Activated T-helper 1 cell treated with anti-CD3 and anti-CD28 coated beads, Interleukin-12 subunit alpha, Interleukin-12 subunit beta, Interleukin-2, Interleukin-4 antibody, amounts not matched to agents 30 ng/mL and 10 ng/mL and 1 ng/mL, durations not matched to agents 14 hours and 24 hours and 36 hours (primary cell): ENCODE measurements at regions of chr2 and their contacts with region 1.

Region 1: GRCh38 chr2:55693181-55694134 is at the start of gene PNPT1:
- DNase-seq: peak; percentile 92
- H3K4me3 Mint-ChIP-seq: peak within 1 kb of the TSS; percentile 98
- H3K27ac Mint-ChIP-seq: peak within 1 kb of the TSS; percentile 89
- H3K4me1 Mint-ChIP-seq: peaks cover 39% of the 10 kb centered on the region
- H3K27me3 Mint-ChIP-seq: peaks cover 2% of the 10 kb centered on the region
- total RNA-seq, gene PNPT1: 65.1 and 71.1 TPM in 2 replicates

Region 2: DNA sequence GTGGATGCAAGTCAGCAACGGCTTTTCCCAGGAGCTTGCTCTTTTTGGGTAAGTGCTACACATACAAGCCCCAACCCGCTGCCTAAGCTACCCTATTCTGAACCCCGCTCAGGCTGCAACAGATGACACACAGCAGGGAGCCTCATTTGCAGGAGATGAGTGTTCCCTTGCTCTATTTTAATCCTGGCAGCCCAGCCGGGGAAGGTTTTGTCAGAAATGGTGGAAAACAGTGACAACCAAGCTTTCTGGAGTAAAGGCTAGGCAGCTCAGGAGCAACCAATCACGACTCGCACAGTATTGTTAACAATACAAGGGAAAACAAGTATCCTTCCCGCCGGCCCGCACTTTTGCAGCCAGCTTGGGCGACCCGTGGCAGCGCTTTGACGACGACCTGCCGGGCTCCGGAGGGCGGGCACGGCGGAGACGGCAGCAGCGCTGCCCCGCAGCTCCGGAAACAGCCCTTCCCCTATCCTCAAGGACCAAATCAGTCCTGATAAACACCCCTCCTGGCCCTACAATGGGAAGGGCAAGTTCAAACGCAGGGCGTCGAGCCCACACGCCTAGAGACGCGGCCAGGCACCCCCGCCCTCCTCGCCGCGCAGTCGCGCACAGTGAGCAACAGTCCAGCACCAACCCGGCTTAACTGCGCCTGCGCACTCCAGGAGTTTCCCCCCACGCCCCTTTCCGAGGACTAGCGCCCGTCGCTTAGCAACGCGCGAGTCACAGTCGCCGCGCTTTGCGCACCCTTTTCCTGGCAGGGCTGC is 1363.1 kb before region 1 on chr2:
- intact Hi-C with region 1: loop called (anchors 5 kb)
- DNase-seq: peak; percentile 86
- H3K4me3 Mint-ChIP-seq: peak overlapping the region; percentile 81
- H3K27ac Mint-ChIP-seq: peak overlapping the region; percentile 69
- H3K4me1 Mint-ChIP-seq: peaks cover 17% of the 10 kb centered on the region
- H3K27me3 Mint-ChIP-seq: peaks cover 19% of the 10 kb centered on the region

Region 3: GRCh38 chr2:55282110-55282917 is 411.1 kb before region 1 on chr2:
- intact Hi-C with region 1: loop called (anchors 5 kb)
- DNase-seq: peak; percentile 85
- H3K4me3 Mint-ChIP-seq: peak overlapping the region; percentile 89
- H3K27ac Mint-ChIP-seq: peak overlapping the region; percentile 93
- H3K4me1 Mint-ChIP-seq: peaks cover 12% of the 10 kb centered on the region
- H3K27me3 Mint-ChIP-seq: peaks cover 2% of the 10 kb centered on the region

Region 4: DNA sequence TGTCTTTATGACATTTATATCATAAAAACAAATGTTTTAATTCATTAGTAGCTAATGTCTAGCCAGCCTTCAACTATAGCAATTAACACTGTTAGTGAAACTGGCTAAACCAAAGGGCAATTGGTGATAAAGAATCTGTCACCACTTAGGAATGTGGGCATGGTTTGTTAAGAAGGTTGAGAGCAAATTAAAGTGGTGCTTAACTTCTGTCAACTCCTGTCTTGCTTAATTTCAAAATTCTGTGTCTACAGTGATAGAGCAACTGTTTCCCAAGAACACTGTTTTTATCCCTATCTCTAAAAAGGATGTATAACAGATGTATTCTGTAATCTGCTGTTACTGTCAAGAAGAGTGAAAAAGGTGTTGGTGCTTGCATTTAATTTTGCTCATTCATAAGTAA is 137.5 kb before region 1 on chr2:
- intact Hi-C with region 1: no loop called
- DNase-seq: no peak
- H3K4me3 Mint-ChIP-seq: no peak overlapping the region
- H3K27ac Mint-ChIP-seq: no peak overlapping the region
- H3K4me1 Mint-ChIP-seq: no peaks in the 10 kb centered on the region
- H3K27me3 Mint-ChIP-seq: no peaks in the 10 kb centered on the region